ENCODE measurements at regions of chr3 and their contacts with region 1.

Region 1: GRCh38 chr3:198080521-198081280 is 120.7 kb downstream of the LMLN start:
- DNase-seq: peak; percentile 13
- H3K4me3 ChIP-seq: peak overlapping the region; percentile 55
- H3K27ac ChIP-seq: no peak overlapping the region
- H3K27me3 ChIP-seq: peaks cover 42% of the 10 kb centered on the region
- CTCF ChIP-seq: peak; percentile 52

Region 2: DNA sequence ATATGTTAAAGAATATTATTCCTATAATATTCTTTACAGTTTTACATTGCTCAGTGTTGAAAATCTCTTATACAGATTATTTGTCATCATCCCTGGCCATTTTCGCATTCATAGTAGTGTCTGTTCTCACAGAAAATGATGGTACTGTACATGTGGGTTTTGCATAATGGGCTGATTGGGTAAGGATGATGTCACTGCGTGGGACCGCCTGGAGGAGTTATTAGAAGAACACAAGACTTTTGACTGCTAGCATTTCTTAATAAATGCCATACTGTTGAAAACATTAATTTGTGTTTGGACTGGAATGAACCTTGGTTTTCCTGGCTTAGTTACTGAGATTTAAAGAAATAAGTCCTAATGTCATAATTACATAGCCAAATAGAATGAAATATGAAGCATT is 269.4 kb before region 1 on chr3:
- CTCF ChIA-PET with region 1: no interaction called
- POLR2A ChIA-PET with region 1: no interaction called
- DNase-seq: no peak
- H3K4me3 ChIP-seq: no peak overlapping the region
- H3K27ac ChIP-seq: no peak overlapping the region
- H3K27me3 ChIP-seq: no peaks in the 10 kb centered on the region
- CTCF ChIP-seq: no peak

Region 3: GRCh38 chr3:197926418-197926817 is 154.3 kb before region 1 on chr3:
- CTCF ChIA-PET with region 1: no interaction called
- POLR2A ChIA-PET with region 1: no interaction called
- DNase-seq: no peak
- H3K4me3 ChIP-seq: no peak overlapping the region
- H3K27ac ChIP-seq: no peak overlapping the region
- H3K27me3 ChIP-seq: no peaks in the 10 kb centered on the region
- CTCF ChIP-seq: peak; percentile 25

Region 4: GRCh38 chr3:198090795-198091332 is 10.2 kb after region 1 on chr3:
- CTCF ChIA-PET with region 1: interaction called, 14 read pairs
- POLR2A ChIA-PET with region 1: no interaction called
- DNase-seq: no peak
- H3K4me3 ChIP-seq: no peak overlapping the region
- H3K27ac ChIP-seq: no peak overlapping the region
- H3K27me3 ChIP-seq: peaks cover 25% of the 10 kb centered on the region
- CTCF ChIP-seq: no peak

Region 5: GRCh38 chr3:198113206-198114053 is 32.7 kb after region 1 on chr3:
- CTCF ChIA-PET with region 1: interaction called, 10 read pairs
- POLR2A ChIA-PET with region 1: no interaction called
- DNase-seq: no peak
- H3K4me3 ChIP-seq: peak overlapping the region; percentile 31; the same call in 1 of the 2 replicates
- H3K27ac ChIP-seq: no peak overlapping the region
- H3K27me3 ChIP-seq: peaks cover 37% of the 10 kb centered on the region
- CTCF ChIP-seq: no peak

Measured in AG04450 (cell line).